PC-9 (cell line): ENCODE measurements at regions of chr18 and their contacts with region 1.

Region 1: GRCh38 chr18:76741365-76741764 is 81.0 kb upstream of the ZNF236 start:
- DNase-seq: no peak
- H3K4me3 ChIP-seq: no peak overlapping the region
- H3K27ac ChIP-seq: no peak overlapping the region
- H3K4me1 ChIP-seq: peaks cover 10% of the 10 kb centered on the region
- H3K27me3 ChIP-seq: peaks cover 25% of the 10 kb centered on the region
- CTCF ChIP-seq: no peak

Region 2: GRCh38 chr18:77597726-77598125 is 856.4 kb after region 1 on chr18:
- CTCF ChIA-PET with region 1: no interaction called
- POLR2A ChIA-PET with region 1: interaction called, 20 read pairs
- intact Hi-C with region 1: no loop called
- DNase-seq: no peak
- H3K4me3 ChIP-seq: no peak overlapping the region
- H3K27ac ChIP-seq: no peak overlapping the region
- H3K4me1 ChIP-seq: no peaks in the 10 kb centered on the region
- H3K27me3 ChIP-seq: peaks cover 39% of the 10 kb centered on the region
- CTCF ChIP-seq: no peak